CD4-positive, alpha-beta memory T cell (primary cell): ENCODE measurements at regions of chr6 and their contacts with region 1.

Region 1: DNA sequence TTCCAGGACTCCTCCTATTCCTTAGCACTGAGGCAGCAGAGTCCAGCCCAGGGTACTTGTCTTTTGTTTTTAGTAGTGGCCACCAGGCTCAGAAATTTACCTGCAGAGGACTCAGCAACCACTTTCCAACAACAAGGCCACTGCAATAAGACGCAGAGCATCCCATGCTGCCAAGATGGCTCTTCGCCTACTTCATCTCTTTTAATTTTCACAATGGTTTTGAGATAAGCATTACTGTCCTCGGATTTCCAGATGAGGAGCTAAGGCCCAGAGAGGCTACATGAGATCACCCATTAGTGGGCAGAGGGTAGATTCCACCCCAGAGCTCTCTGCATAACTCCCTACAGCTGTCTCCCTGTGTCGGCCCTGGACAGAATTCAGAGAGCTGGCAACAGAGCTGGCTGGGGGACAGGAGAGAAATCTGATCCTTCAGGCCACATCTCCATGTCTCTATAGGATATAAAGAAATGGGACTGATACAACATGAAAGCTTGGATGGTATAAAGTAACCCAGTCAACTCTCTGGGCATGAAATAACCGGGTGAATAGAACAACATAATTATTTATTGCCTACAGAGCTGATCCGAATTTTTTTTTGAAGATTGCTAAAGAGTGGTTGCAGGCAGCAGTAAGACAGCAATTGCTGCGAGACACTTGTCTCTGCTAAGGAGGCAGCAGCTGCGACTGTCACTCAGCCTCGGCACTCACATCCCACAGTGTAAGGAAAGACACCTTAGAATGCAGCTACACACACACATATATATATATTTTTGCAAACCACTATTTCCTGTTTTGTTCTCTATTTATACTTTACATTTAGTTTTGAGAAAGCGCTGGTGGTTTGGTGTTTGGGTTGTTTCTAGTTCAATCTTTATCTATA is 37.2 kb downstream of the SCML4 start:
- DNase-seq: peak; percentile 46 to 62 (median 58)
- H3K4me3 ChIP-seq: peak overlapping the region in 1 of 2 donors; percentile 33
- H3K4me3 Mint-ChIP-seq: peak overlapping the region; percentile 78 to 98 (median 84)
- H3K27ac ChIP-seq: peak overlapping the region; percentile 45
- H3K27ac Mint-ChIP-seq: peak overlapping the region; percentile 85 to 98 (median 95)
- H3K4me1 ChIP-seq: peaks cover 89% of the 10 kb centered on the region
- H3K4me1 Mint-ChIP-seq: peaks cover 68 to 91% (median 78%) of the 10 kb centered on the region in 4 donors
- H3K27me3 ChIP-seq: no peaks in the 10 kb centered on the region
- H3K27me3 Mint-ChIP-seq: no peaks in the 10 kb centered on the region

Region 2: DNA sequence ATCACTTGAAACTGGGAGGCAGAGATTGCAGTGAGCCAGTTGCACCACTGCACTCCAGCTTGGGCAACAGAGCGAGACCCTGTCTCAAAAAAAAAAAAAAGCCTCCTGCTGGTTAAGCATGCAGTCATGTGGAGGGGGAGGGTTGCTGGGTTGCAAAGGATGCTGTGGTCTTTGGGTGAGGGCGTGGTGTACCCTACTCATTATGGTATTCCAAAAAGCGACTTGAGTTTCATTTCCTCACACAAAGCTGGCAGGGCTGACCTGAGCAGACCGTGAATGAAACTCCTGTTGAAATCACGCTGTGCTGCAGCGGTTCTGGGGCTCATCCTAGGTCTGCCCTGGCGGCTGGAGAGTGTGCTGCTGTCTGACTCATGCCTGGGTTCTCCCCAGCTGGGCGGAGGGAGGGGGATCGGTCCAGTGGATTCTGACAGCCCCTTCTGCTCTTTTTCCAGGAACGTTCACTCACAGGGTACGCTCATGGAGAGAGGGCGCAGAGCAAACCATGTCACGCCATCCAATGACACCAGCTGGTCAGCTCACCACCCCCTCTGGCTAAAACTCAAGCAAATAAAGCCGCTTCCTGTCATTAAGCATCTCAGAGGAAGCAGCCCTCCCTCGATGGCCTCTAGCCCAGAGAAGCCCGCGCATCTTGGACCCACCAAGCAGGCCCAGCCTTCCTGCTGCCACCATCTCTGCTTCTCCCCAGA is 129.0 kb before region 1 on chr6:
- CTCF ChIA-PET with region 1: no interaction called
- POLR2A ChIA-PET with region 1: no interaction called
- intact Hi-C with region 1: no loop called
- DNase-seq: peak; percentile 25 to 43 (median 40)
- H3K4me3 ChIP-seq: peak overlapping the region in 1 of 2 donors; percentile 34
- H3K4me3 Mint-ChIP-seq: peak overlapping the region; percentile 78 to 86 (median 82)
- H3K27ac ChIP-seq: no peak overlapping the region
- H3K27ac Mint-ChIP-seq: peak overlapping the region; percentile 32 to 84 (median 66)
- H3K4me1 ChIP-seq: peaks cover 16% of the 10 kb centered on the region
- H3K4me1 Mint-ChIP-seq: peaks cover 6 to 29% (median 17%) of the 10 kb centered on the region in 4 donors
- H3K27me3 ChIP-seq: no peaks in the 10 kb centered on the region
- H3K27me3 Mint-ChIP-seq: no peaks in the 10 kb centered on the region

Region 3: DNA sequence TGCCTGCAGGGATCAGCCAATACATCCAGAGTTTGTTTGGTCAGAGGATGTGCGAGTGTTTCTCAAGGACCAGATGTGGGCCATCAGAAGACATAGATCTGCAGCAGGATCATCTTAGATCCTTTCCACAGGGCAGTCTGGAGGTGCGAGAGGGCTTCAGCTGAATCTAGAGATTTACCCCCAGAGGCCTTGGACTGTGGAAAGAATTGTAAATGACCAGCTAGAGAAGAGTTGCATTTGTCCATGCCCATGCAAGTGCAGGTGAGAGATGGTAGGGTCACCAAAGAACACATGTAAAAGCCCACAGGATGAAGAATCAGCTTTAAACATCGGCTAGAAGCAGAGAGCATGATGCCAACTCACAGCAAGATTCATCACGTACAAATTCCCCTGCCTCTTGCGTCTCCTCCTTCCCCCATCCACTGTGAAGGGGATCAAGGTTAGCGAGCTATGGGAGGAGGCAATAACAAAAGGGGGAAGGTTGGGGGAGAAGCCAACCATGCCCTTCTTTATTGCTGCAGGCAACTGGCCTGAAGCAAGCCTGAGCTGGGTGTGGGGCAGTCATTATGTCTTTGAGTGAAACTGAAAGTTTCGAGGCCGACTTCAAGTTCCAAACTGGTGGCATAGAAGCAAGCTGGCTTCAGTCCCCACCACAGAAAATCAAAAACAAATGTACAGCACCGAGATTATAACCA is 46.3 kb before region 1 on chr6:
- CTCF ChIA-PET with region 1: interaction called, 22 read pairs
- POLR2A ChIA-PET with region 1: interaction called, 88 read pairs
- intact Hi-C with region 1: no loop called
- DNase-seq: peak in 3 of 5 donors; percentile 33 to 42 (median 39)
- H3K4me3 ChIP-seq: peak overlapping the region; percentile 21 to 60
- H3K4me3 Mint-ChIP-seq: peak overlapping the region; percentile 75 to 91 (median 80)
- H3K27ac ChIP-seq: peak overlapping the region; percentile 63
- H3K27ac Mint-ChIP-seq: peak overlapping the region; percentile 89 to 96 (median 92)
- H3K4me1 ChIP-seq: peaks cover 74% of the 10 kb centered on the region
- H3K4me1 Mint-ChIP-seq: peaks cover 75 to 86% (median 79%) of the 10 kb centered on the region in 4 donors
- H3K27me3 ChIP-seq: no peaks in the 10 kb centered on the region
- H3K27me3 Mint-ChIP-seq: no peaks in the 10 kb centered on the region

Region 4: DNA sequence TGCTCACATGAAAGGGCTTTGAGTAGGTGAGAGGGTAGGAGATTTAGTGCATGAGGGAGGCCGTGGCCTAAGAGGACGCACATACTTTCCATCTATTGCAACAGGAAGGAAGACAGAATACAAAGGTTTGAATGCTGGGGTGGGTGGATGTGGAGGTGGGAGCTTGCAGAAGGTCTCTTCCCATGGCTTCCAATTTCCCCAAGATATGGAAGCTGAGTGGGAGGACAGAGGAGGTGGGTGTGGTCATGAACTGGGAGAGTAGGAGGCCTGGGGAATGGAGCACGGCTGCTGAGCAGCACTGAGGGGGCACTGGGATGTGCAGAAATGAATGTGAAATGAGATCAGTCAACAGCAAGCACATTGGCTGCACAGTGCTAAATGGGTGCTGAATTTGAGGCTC is 33.2 kb before region 1 on chr6:
- CTCF ChIA-PET with region 1: no interaction called
- POLR2A ChIA-PET with region 1: interaction called, 22 read pairs
- intact Hi-C with region 1: no loop called
- DNase-seq: no peak
- H3K4me3 ChIP-seq: no peak overlapping the region
- H3K4me3 Mint-ChIP-seq: peak overlapping the region in 7 of 8 donors; percentile 57 to 77 (median 64)
- H3K27ac ChIP-seq: no peak overlapping the region
- H3K27ac Mint-ChIP-seq: peak overlapping the region in 6 of 7 donors; percentile 47 to 90 (median 78)
- H3K4me1 ChIP-seq: peaks cover 64% of the 10 kb centered on the region
- H3K4me1 Mint-ChIP-seq: peaks cover 56 to 91% (median 77%) of the 10 kb centered on the region in 4 donors
- H3K27me3 ChIP-seq: no peaks in the 10 kb centered on the region
- H3K27me3 Mint-ChIP-seq: no peaks in the 10 kb centered on the region

Region 5: DNA sequence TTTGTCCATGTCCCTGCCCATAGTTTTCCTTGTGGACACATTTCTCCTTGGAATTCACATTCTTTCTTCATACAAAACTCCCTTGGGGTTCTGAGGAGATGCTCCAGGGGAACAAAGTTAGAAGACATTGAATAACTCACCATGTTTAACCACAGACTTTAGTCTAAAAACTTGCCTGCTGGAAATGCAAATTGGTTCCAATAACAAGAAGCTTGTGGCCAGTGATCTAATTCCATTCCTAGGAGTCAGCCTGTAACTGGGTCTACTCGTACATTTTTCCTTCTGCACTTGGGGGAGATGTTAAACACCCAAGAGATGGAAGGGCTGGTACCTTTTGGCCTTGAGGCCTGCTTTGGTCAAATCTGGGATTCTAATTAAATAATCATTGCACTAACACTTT is 23.0 kb before region 1 on chr6:
- CTCF ChIA-PET with region 1: interaction called, 10 read pairs
- POLR2A ChIA-PET with region 1: interaction called, 4 read pairs
- intact Hi-C with region 1: no loop called
- DNase-seq: no peak
- H3K4me3 ChIP-seq: no peak overlapping the region
- H3K4me3 Mint-ChIP-seq: no peak overlapping the region
- H3K27ac ChIP-seq: no peak overlapping the region
- H3K27ac Mint-ChIP-seq: peak overlapping the region in 2 of 7 donors; percentile 42 to 47
- H3K4me1 ChIP-seq: no peaks in the 10 kb centered on the region
- H3K4me1 Mint-ChIP-seq: peaks cover 10 to 24% (median 15%) of the 10 kb centered on the region in 4 donors
- H3K27me3 ChIP-seq: no peaks in the 10 kb centered on the region
- H3K27me3 Mint-ChIP-seq: no peaks in the 10 kb centered on the region

Region 6: DNA sequence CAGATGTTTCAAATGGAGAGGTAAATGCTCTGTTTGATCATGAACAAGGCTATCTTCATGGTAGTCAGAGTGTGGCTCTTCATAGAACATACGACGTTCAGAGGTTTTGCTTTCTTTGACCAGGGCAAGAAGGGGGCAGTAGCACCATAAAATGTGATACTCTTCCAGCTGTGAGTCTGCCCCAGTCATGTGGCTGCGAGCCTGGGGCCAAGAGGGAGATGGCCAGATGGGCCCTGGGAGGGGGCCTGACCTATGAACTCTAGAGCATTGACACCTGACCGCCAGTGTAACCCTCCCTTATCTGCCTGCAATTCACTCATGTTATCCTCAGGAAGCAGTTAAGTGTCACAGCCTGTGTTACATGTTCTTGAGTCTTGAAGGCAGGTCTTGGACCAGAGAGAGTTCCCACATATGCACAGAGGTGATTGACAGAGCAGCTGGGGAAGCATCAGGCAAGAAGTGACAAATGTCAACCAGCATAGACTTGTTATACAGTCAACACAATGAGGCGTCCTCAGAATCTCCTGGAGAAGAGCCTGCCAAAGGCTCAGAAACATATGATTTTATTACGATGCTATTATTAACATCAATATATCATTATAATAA is 17.8 kb before region 1 on chr6:
- CTCF ChIA-PET with region 1: interaction called, 3 read pairs
- POLR2A ChIA-PET with region 1: interaction called, 14 read pairs
- intact Hi-C with region 1: no loop called
- DNase-seq: no peak
- H3K4me3 ChIP-seq: no peak overlapping the region
- H3K4me3 Mint-ChIP-seq: no peak overlapping the region
- H3K27ac ChIP-seq: no peak overlapping the region
- H3K27ac Mint-ChIP-seq: peak overlapping the region in 3 of 7 donors; percentile 15 to 61 (median 46)
- H3K4me1 ChIP-seq: no peaks in the 10 kb centered on the region
- H3K4me1 Mint-ChIP-seq: peaks cover 10 to 39% (median 16%) of the 10 kb centered on the region in 4 donors
- H3K27me3 ChIP-seq: no peaks in the 10 kb centered on the region
- H3K27me3 Mint-ChIP-seq: no peaks in the 10 kb centered on the region